Activated naive CD4-positive, alpha-beta T cell treated with anti-CD3 and anti-CD28 coated beads for 36 hours (primary cell): ENCODE measurements at regions of chr17 and their contacts with region 1.

Region 1: GRCh38 chr17:49343273-49343672 is 18.8 kb downstream of the ZNF652 start:
- DNase-seq: peak; percentile 31
- H3K4me3 Mint-ChIP-seq: peak overlapping the region; percentile 26
- H3K27ac Mint-ChIP-seq: peak overlapping the region; percentile 43
- H3K4me1 Mint-ChIP-seq: peaks cover 64% of the 10 kb centered on the region
- H3K27me3 Mint-ChIP-seq: no peaks in the 10 kb centered on the region

Region 2: DNA sequence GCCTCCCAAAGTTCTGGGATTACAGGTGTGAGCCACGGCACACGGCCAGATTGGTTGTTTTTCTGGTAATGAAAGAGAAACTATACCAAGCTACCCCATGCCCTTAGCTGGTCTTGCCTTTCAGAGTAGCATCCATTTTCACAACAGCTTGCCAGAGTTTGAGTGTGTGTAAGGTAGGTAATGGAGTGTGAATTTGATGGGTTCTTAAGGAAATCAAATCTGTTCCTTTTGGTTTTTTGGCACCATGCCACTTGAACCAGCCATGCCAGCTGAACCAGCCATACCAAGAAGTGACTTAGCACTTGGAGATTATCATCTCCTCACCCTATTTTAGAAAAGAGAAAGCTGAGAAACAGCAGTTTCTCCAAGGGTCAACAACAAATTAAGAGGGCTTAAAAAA is 507.3 kb before region 1 on chr17:
- CTCF ChIA-PET with region 1: no interaction called
- intact Hi-C with region 1: loop called (anchors 5 kb)
- DNase-seq: peak; percentile 15
- H3K4me3 Mint-ChIP-seq: no peak overlapping the region
- H3K27ac Mint-ChIP-seq: no peak overlapping the region
- H3K4me1 Mint-ChIP-seq: peaks cover 89% of the 10 kb centered on the region
- H3K27me3 Mint-ChIP-seq: no peaks in the 10 kb centered on the region

Region 3: DNA sequence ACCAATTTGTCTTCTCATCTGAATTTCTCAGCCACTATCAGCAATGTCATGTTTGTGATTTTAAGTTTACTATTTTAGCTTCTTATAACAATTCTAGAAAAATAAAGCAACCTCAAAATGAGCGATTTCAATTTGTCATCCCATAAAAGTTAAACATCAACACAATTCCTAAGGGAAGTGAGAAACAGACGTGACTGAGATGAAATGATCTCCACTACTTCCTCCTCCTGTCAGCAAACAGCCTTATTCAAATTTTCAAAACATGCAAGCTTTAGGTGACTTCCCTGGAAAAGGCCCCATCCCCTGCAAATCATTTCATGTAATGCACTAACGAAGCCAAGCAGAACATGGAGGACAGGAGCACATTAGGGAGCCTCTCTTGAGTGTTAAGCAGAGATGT is 46.1 kb before region 1 on chr17:
- CTCF ChIA-PET with region 1: no interaction called
- intact Hi-C with region 1: no loop called
- DNase-seq: no peak
- H3K4me3 Mint-ChIP-seq: no peak overlapping the region
- H3K27ac Mint-ChIP-seq: no peak overlapping the region
- H3K4me1 Mint-ChIP-seq: peaks cover 6% of the 10 kb centered on the region
- H3K27me3 Mint-ChIP-seq: no peaks in the 10 kb centered on the region

Region 4: DNA sequence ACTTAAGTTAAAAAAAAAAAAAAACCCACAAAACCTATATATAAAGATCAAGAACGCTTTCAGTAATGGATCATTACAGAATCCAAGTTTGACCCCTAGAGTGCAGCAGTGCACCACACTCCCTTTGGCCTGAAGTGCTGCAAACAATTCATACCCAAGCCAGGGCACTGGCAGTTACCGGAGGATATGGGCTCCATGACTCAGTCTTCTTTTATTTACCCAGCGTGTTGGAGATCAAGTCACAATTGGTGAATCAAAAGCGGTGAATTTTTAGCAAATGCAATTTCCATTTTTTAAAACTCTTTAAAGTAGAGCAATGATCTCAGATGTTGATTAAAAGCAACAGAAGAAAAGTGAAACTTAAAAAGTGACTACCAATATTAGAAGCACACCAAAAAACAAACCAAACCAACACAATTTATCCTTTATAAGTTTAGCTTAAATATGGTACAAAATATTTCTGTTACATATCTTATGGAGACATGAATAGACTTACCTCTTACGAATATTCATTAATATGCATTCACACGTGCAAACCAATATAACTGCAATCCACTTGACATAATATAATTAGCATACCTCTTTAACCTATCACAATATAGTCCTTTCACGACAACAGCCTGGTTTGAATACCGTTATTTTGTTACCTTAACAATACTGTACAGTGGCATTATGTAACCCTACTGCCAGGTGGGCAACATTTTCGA is 27.6 kb before region 1 on chr17:
- CTCF ChIA-PET with region 1: interaction called, 6 read pairs
- intact Hi-C with region 1: loop called (anchors 1 kb)
- DNase-seq: peak; percentile 91
- H3K4me3 Mint-ChIP-seq: peak overlapping the region; percentile 41
- H3K27ac Mint-ChIP-seq: peak overlapping the region; percentile 62
- H3K4me1 Mint-ChIP-seq: peaks cover 23% of the 10 kb centered on the region
- H3K27me3 Mint-ChIP-seq: no peaks in the 10 kb centered on the region

Region 5: GRCh38 chr17:49327835-49328784 is 15.2 kb before region 1 on chr17:
- CTCF ChIA-PET with region 1: interaction called, 7 read pairs
- intact Hi-C with region 1: loop called (anchors 1 kb)
- DNase-seq: peak; percentile 27
- H3K4me3 Mint-ChIP-seq: peak overlapping the region; percentile 0
- H3K27ac Mint-ChIP-seq: peak overlapping the region; percentile 42
- H3K4me1 Mint-ChIP-seq: peaks cover 45% of the 10 kb centered on the region
- H3K27me3 Mint-ChIP-seq: no peaks in the 10 kb centered on the region

Region 6: DNA sequence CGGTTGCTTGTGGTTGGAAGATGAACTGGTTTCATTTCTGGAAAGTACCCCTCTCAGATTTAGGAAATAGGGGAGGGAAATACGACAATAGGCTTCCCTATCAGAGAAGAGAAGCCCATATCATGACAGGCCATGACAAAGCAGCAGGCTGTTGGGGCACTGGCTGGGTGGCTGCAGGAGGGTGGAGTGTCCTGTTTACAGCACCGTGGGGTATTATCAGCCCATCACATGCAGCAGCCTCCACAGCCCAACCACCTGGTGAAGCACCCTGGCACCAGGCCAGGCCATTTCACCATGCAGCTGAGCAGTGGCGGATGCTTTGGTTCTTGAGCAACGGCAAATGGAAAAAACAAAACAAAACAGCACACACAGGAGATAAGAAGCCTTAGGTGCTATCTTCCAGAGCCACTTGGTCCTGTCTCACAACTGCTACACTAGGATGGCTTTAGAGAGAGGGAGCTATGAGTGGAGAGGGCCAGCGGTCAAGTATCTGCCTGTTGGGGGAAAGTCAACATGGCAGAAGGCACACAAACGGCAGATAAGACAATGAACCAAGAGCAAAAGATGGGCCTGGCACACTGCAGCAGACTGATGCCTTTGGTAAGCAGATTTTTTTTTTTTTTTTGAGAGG is 396.5 kb after region 1 on chr17:
- CTCF ChIA-PET with region 1: no interaction called
- intact Hi-C with region 1: loop called (anchors 10 kb)
- DNase-seq: peak; percentile 92
- H3K4me3 Mint-ChIP-seq: peak overlapping the region; percentile 84
- H3K27ac Mint-ChIP-seq: peak overlapping the region; percentile 99
- H3K4me1 Mint-ChIP-seq: peaks cover 73% of the 10 kb centered on the region
- H3K27me3 Mint-ChIP-seq: no peaks in the 10 kb centered on the region